PC-9 (cell line): ENCODE measurements at regions of chr1 and their contacts with region 1.

Region 1: GRCh38 chr1:113835642-113836307 is 23.5 kb upstream of the RSBN1 start:
- DNase-seq: peak in 1 of 2 experiments; percentile 54
- H3K4me3 ChIP-seq: no peak overlapping the region
- H3K27ac ChIP-seq: no peak overlapping the region
- H3K4me1 ChIP-seq: no peaks in the 10 kb centered on the region
- H3K27me3 ChIP-seq: no peaks in the 10 kb centered on the region
- CTCF ChIP-seq: peak; percentile 91

Region 2: GRCh38 chr1:115373305-115373704 is 1537.5 kb after region 1 on chr1:
- CTCF ChIA-PET with region 1: no interaction called
- POLR2A ChIA-PET with region 1: interaction called, 15 read pairs
- intact Hi-C with region 1: no loop called
- DNase-seq: peak; percentile 10 to 79
- H3K4me3 ChIP-seq: no peak overlapping the region
- H3K27ac ChIP-seq: no peak overlapping the region
- H3K4me1 ChIP-seq: peaks cover 18% of the 10 kb centered on the region
- H3K27me3 ChIP-seq: no peaks in the 10 kb centered on the region
- CTCF ChIP-seq: no peak